CD8-positive, alpha-beta memory T cell (primary cell): ENCODE measurements at regions of chr7 and their contacts with region 1.

Region 1: DNA sequence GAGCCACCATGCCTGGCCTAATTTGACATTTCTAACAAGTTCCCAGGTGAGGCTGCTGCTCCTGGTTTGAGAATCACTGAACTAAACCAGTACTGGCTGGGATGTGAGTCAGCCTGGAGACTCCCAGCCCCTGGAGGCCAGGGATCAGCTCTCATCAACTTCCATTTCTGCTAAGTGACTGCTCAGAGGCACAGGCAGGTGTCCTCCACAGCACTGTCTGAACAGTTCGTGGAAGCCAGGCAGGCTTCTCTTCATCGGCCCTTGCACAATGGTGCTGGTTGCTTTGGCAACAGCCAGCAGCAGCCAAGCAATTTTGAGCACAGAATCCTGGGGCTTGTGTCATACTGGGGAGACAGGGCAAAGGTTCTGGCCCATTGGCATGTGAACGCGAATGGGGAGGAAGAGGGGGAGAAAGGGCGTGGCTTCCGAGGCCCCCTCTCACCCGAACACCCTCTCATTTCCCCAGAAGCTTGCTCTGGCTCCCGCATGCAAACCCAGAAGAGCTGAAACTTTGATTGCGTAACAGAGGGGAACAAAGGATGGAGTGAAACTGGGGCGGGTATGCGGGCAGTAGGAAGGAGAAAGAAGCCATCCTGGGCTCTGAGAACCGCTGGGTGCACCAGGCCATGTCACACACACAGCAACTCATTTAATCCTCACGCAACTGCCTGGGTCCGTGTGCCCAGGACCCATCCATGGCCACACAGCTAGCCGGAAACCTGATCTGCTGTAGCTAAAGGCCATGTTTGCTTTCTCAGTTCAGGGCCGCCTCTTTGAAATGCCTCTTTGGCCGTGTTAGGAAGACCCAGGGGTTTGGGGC is 9.0 kb upstream of the POR start:
- DNase-seq: no peak
- H3K4me3 ChIP-seq: no peak overlapping the region
- H3K4me3 Mint-ChIP-seq: no peak overlapping the region
- H3K27ac ChIP-seq: no peak overlapping the region
- H3K27ac Mint-ChIP-seq: peak overlapping the region in 2 of 8 donors; percentile 26 to 77
- H3K4me1 ChIP-seq: no peaks in the 10 kb centered on the region
- H3K4me1 Mint-ChIP-seq: no peaks in the 10 kb centered on the region
- H3K27me3 ChIP-seq: no peaks in the 10 kb centered on the region
- H3K27me3 Mint-ChIP-seq: peaks cover 0 to 4% of the 10 kb centered on the region in 2 donors

Region 2: DNA sequence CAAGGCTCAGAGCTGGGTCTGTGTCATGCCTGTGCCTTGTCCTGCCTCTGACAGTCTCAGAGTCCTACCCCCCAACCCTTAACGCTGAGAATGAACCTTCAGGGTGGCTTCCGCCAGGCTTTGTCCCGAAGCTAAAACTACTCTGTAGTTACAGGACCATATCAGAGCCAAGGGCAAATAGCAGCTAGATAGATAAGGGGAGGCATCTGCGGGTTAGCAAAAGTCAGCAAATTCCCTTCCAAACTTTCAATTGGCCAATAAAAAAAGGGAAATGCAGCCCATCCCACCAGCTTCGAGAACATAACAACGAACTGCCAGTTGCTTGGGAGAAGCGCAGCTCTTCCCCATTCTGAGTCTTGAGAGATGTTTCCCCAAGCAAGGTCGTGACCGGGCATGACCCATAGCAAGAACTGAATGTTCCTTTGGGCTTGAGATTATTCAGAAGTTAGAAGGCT is 110.1 kb before region 1 on chr7:
- CTCF ChIA-PET with region 1: no interaction called
- POLR2A ChIA-PET with region 1: no interaction called
- DNase-seq: no peak
- H3K4me3 ChIP-seq: no peak overlapping the region
- H3K4me3 Mint-ChIP-seq: no peak overlapping the region
- H3K27ac ChIP-seq: peak overlapping the region; percentile 51
- H3K27ac Mint-ChIP-seq: peak overlapping the region in 1 of 8 donors; percentile 34
- H3K4me1 ChIP-seq: no peaks in the 10 kb centered on the region
- H3K4me1 Mint-ChIP-seq: no peaks in the 10 kb centered on the region
- H3K27me3 ChIP-seq: no peaks in the 10 kb centered on the region
- H3K27me3 Mint-ChIP-seq: peaks cover 5 to 21% of the 10 kb centered on the region in 2 donors

Region 3: DNA sequence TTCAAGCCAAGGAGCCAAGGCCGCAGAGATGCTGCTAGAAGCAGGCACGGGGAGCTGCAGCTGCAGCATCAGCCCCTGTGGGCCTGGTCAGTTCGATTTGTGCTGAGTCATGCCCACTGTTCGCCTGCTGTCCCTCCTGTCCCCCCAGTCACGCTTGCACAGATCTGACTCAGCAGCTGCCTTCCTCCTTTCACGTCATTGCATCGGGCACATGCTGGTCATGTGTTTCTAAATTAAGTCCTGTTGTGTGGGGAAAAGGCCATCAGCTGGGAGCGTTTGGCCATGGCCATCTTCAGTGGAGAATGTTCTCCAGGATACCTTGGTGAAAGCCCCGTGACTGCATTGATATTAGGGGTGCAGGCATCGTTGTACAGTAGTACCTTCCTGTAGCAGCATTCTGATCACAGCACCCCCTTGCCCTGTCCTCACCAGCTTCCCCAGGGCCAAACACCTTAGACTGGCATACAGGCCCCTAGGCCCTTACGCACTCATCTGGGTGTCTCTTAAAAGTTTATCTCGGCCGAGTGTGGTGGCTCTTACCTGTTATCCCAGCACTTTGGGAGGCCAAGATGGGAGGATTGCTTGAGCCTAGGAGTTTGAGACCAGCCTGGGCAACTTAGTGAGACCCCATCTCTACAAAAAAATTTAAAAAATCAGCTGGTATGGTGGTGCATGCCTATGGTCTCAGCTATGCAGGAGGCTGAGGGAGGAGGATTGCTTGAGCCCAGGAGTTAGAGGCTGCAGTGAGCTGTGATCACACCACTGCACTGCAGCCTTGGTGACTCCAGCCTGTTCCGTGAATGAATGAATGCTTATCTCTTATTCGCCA is 32.2 kb after region 1 on chr7:
- CTCF ChIA-PET with region 1: no interaction called
- POLR2A ChIA-PET with region 1: interaction called, 12 read pairs
- DNase-seq: no peak
- H3K4me3 ChIP-seq: no peak overlapping the region
- H3K4me3 Mint-ChIP-seq: no peak overlapping the region
- H3K27ac ChIP-seq: no peak overlapping the region
- H3K27ac Mint-ChIP-seq: no peak overlapping the region
- H3K4me1 ChIP-seq: no peaks in the 10 kb centered on the region
- H3K4me1 Mint-ChIP-seq: peaks cover 1 to 17% (median 9%) of the 10 kb centered on the region in 3 donors
- H3K27me3 ChIP-seq: no peaks in the 10 kb centered on the region
- H3K27me3 Mint-ChIP-seq: peaks cover 0 to 3% of the 10 kb centered on the region in 2 donors